ENCODE measurements at regions of chr5 and their contacts with region 1.

Region 1: DNA sequence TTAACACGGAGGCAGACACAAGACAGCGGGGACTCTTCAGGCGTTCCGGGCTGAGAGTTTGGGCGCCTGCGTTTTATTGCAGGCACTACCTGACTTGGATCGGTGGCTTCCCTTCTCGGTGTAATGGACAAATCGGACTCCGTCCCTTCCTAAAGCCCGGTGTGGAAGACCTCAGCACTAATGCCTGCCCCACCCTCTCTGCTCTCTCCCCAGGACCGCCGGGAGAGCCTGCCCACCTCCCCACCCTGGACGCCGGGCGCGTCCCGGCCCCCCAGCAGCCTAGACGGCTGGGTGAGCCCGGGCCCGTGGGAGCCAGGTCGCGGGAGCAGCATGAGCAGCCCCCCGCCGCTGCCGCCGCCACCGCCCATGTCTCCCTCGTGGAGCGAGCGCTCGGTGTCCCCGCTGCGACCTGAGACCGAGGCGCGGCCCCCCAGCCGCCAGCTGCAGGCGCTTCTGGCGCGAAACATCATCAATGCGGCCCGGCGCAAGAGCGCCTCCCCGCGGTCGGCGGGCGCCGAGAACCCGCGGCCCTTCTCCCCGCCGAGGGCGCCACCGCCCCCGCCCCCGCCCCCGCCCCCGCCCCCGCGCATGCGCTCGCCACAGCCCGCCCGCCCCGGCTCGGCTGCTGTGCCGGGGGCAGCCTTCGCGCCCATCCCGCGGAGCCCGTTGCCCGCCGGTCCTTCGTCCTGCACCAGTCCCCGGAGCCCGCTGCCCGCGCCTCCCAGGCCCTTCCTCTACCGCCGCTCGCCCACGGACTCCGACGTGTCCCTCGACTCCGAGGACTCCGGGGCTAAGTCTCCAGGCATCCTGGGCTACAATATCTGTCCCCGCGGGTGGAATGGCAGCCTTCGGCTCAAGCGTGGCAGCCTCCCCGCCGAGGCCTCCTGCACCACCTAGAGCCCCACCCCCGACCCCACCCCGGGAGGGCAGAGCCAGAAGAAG is 4.6 kb upstream of the MYOZ3 start:
- DNase-seq: peak; percentile 100
- H3K4me3 ChIP-seq: peak overlapping the region; percentile 44 to 52
- H3K27ac ChIP-seq: peak overlapping the region in 1 of 2 experiments; percentile 82; a peak in 2 of 4 replicates
- H3K4me1 ChIP-seq: peaks cover 9 to 55% of the 10 kb centered on the region in 2 experiments
- H3K27me3 ChIP-seq: no peaks in the 10 kb centered on the region
- CTCF ChIP-seq: peak; percentile 49
- EP300 ChIP-seq: no peak
- RAD21 ChIP-seq: peak; percentile 79

Region 2: DNA sequence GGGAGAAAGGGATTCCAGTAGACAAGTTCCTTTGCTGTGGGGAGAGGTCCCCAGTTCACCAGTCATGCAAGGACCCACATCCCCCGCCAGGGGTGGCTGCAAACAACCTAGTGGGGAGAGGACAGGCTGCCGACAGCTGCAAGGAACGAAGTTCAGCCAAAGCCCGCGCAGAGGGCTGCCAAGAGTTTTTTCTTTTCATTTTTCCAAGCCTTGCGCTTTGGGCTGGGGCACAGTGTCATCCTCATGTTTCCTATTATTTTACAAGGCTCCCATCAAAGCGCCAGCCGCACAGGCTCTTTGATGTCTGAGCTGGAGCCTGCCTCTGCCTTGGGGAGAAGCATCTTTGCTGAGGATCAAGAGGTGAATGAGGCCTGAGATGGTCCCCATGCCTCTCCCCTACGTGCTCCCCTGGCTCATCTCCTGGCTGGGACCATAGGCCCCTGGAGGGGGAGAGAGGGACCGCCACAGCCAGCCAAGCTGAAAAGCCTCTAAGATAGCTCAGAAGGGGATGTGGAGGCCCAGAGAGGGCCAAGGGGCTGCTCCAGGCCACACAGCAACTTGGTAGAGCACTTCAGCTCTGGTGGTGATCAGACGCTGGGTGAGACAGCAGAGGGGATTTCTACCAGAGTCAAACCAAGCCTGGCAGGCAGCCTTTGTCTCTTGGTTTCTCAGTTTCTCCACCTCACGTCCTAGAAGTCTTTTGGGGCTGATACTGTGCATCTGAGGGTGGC is 66.4 kb before region 1 on chr5:
- CTCF ChIA-PET with region 1: interaction called, 11 read pairs
- POLR2A ChIA-PET with region 1: no interaction called
- DNase-seq: peak; percentile 58
- H3K4me3 ChIP-seq: no peak overlapping the region
- H3K27ac ChIP-seq: peak overlapping the region; percentile 41 to 93
- H3K4me1 ChIP-seq: peaks cover 11 to 68% of the 10 kb centered on the region in 2 experiments; a peak in 3 of 4 replicates
- H3K27me3 ChIP-seq: no peaks in the 10 kb centered on the region
- CTCF ChIP-seq: peak; percentile 54
- EP300 ChIP-seq: peak in 1 of 2 experiments; percentile 3; a peak in 1 of 4 replicates
- RAD21 ChIP-seq: peak; percentile 59

Region 3: GRCh38 chr5:150615141-150615699 is 41.2 kb before region 1 on chr5:
- CTCF ChIA-PET with region 1: interaction called, 16 read pairs
- POLR2A ChIA-PET with region 1: interaction called, 3 read pairs
- DNase-seq: no peak
- H3K4me3 ChIP-seq: no peak overlapping the region
- H3K27ac ChIP-seq: peak overlapping the region in 1 of 2 experiments; percentile 86; a peak in 2 of 4 replicates
- H3K4me1 ChIP-seq: peaks cover 0 to 82% of the 10 kb centered on the region in 2 experiments; a peak in 3 of 4 replicates
- H3K27me3 ChIP-seq: no peaks in the 10 kb centered on the region
- CTCF ChIP-seq: no peak
- EP300 ChIP-seq: no peak
- RAD21 ChIP-seq: no peak

Region 4: GRCh38 chr5:150645077-150645700 is 11.3 kb before region 1 on chr5:
- CTCF ChIA-PET with region 1: interaction called, 44 read pairs
- POLR2A ChIA-PET with region 1: interaction called, 3 read pairs
- DNase-seq: peak; percentile 67
- H3K4me3 ChIP-seq: no peak overlapping the region
- H3K27ac ChIP-seq: peak overlapping the region; percentile 36 to 93; a peak in 3 of 4 replicates
- H3K4me1 ChIP-seq: peaks cover 44 to 56% of the 10 kb centered on the region in 2 experiments
- H3K27me3 ChIP-seq: no peaks in the 10 kb centered on the region
- CTCF ChIP-seq: no peak
- EP300 ChIP-seq: no peak; a peak in 1 of 4 replicates
- RAD21 ChIP-seq: no peak; the same call in 1 of the 2 replicates

Region 5: GRCh38 chr5:150700594-150701293 is 44.3 kb after region 1 on chr5 and contains the start of gene RBM22:
- CTCF ChIA-PET with region 1: interaction called, 13 read pairs
- POLR2A ChIA-PET with region 1: interaction called, 4 read pairs
- DNase-seq: peak; percentile 87
- H3K4me3 ChIP-seq: peak within 1 kb of the TSS; percentile 76 to 98
- H3K27ac ChIP-seq: peak within 1 kb of the TSS; percentile 87 to 95
- H3K4me1 ChIP-seq: peaks cover 11 to 15% of the 10 kb centered on the region in 2 experiments
- H3K27me3 ChIP-seq: no peaks in the 10 kb centered on the region
- CTCF ChIP-seq: peak; percentile 72
- EP300 ChIP-seq: no peak
- RAD21 ChIP-seq: peak; percentile 1; the same call in 1 of the 2 replicates
- polyA plus RNA-seq, gene RBM22: 30.7 and 41.0 TPM in 2 replicates